CD4-positive, alpha-beta memory T cell (primary cell): ENCODE measurements at regions of chr2 and their contacts with region 1.

Region 1: GRCh38 chr2:230326453-230327417 is at the start of gene SP140L:
- DNase-seq: peak; percentile 73 to 89 (median 79)
- H3K4me3 ChIP-seq: peak within 1 kb of the TSS; percentile 51 to 82
- H3K4me3 Mint-ChIP-seq: peak within 1 kb of the TSS; percentile 90 to 98 (median 94)
- H3K27ac ChIP-seq: peak within 1 kb of the TSS; percentile 84
- H3K27ac Mint-ChIP-seq: peak within 1 kb of the TSS; percentile 94 to 99 (median 97)
- H3K4me1 ChIP-seq: peaks cover 78% of the 10 kb centered on the region
- H3K4me1 Mint-ChIP-seq: peaks cover 48 to 90% (median 75%) of the 10 kb centered on the region in 4 donors
- H3K27me3 ChIP-seq: no peaks in the 10 kb centered on the region
- H3K27me3 Mint-ChIP-seq: no peaks in the 10 kb centered on the region
- total RNA-seq, gene SP140L: 98.6 to 102 TPM

Region 2: GRCh38 chr2:230254152-230254881 is 72.4 kb before region 1 on chr2:
- CTCF ChIA-PET with region 1: no interaction called
- POLR2A ChIA-PET with region 1: interaction called, 15 read pairs
- intact Hi-C with region 1: no loop called
- DNase-seq: peak; percentile 75 to 82 (median 78)
- H3K4me3 ChIP-seq: peak overlapping the region in 1 of 2 donors; percentile 11
- H3K4me3 Mint-ChIP-seq: no peak overlapping the region
- H3K27ac ChIP-seq: no peak overlapping the region
- H3K27ac Mint-ChIP-seq: no peak overlapping the region
- H3K4me1 ChIP-seq: peaks cover 39% of the 10 kb centered on the region
- H3K4me1 Mint-ChIP-seq: peaks cover 8 to 14% (median 12%) of the 10 kb centered on the region in 4 donors
- H3K27me3 ChIP-seq: no peaks in the 10 kb centered on the region
- H3K27me3 Mint-ChIP-seq: no peaks in the 10 kb centered on the region

Region 3: DNA sequence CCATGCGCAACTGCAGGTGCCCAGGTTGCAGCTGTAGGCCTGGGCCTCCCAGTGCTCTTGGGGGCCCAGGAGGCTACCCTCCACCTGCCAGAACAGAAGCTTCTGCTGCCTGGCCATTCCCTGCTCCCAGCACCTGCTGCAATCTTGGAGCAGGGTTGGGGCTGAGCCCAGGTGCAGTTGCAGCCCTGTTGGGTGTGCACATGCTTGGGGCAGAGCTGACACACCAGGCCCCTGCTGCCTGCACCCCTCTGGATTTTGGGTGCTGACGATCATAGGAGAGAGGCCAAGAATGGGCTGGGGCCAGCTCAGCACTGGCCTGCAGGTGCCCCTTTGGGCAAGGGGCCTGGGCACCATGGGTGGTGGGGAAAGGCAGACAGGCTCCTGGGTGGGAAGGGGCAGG is 20.3 kb before region 1 on chr2:
- CTCF ChIA-PET with region 1: no interaction called
- POLR2A ChIA-PET with region 1: no interaction called
- intact Hi-C with region 1: no loop called
- DNase-seq: no peak
- H3K4me3 ChIP-seq: no peak overlapping the region
- H3K4me3 Mint-ChIP-seq: no peak overlapping the region
- H3K27ac ChIP-seq: no peak overlapping the region
- H3K27ac Mint-ChIP-seq: no peak overlapping the region
- H3K4me1 ChIP-seq: no peaks in the 10 kb centered on the region
- H3K4me1 Mint-ChIP-seq: peaks cover 0 to 8% (median 3%) of the 10 kb centered on the region in 4 donors
- H3K27me3 ChIP-seq: no peaks in the 10 kb centered on the region
- H3K27me3 Mint-ChIP-seq: no peaks in the 10 kb centered on the region

Region 4: DNA sequence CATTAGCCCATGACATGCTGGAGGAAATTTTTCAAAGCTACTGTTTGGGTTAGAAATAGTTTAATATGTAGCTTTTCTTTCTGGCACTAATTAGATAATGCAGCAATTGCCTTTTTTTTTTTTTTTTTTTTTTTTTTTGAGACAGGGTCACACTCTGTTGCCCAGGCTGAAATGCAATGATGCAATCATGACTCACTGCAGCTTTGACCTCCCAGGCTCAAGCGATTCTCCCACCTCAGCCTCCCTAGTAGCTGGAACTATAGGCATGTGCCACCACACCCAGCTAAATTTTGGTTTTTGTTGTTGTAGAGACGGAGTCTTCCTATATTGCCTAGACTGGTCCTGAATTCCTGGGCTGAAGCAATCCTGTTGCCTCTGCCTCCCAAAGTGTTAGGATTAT is 225.4 kb after region 1 on chr2:
- CTCF ChIA-PET with region 1: no interaction called
- POLR2A ChIA-PET with region 1: no interaction called
- intact Hi-C with region 1: no loop called
- DNase-seq: no peak
- H3K4me3 ChIP-seq: no peak overlapping the region
- H3K4me3 Mint-ChIP-seq: no peak overlapping the region
- H3K27ac ChIP-seq: no peak overlapping the region
- H3K27ac Mint-ChIP-seq: no peak overlapping the region
- H3K4me1 ChIP-seq: peaks cover 8% of the 10 kb centered on the region
- H3K4me1 Mint-ChIP-seq: peaks cover 8 to 12% (median 10%) of the 10 kb centered on the region in 4 donors
- H3K27me3 ChIP-seq: no peaks in the 10 kb centered on the region
- H3K27me3 Mint-ChIP-seq: peaks cover 0 to 2% of the 10 kb centered on the region in 2 donors